Ascending aorta (tissue), 2 donors: ENCODE measurements at regions of chr12 and their contacts with region 1.

Region 1: DNA sequence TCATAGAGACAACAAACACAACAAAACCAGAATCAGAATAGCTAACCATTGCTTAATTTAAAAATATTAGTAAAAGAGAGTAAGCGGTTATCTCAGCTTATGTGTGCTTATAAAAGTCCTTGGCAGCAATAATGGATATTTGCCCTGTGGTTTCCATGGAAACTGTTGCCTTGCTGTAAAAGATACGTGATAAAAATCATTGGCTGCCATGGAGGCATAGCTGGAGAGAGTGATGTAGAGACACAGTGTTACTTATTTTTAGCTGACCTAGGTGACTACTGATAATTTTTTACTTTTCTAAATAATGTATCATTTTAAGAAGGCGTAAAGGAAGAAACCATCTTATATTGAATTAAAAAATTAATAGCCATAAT is 92.9 kb downstream of the ERC1 start:
- DNase-seq: peak in 1 of 2 donors; percentile 64
- H3K4me3 ChIP-seq: peak overlapping the region; percentile 1 to 52
- H3K27ac ChIP-seq: peak overlapping the region; percentile 80 to 84
- H3K4me1 ChIP-seq: peaks cover 0 to 10% of the 10 kb centered on the region in 2 donors
- H3K27me3 ChIP-seq: no peaks in the 10 kb centered on the region
- CTCF ChIP-seq: no peak

Region 2: GRCh38 chr12:990661-991349 is 93.1 kb before region 1 on chr12 and contains the start of gene ERC1:
- intact Hi-C with region 1: loop called (anchors 5 kb)
- DNase-seq: peak; percentile 55 to 93
- H3K4me3 ChIP-seq: peak within 1 kb of the TSS; percentile 90 to 94
- H3K27ac ChIP-seq: peak within 1 kb of the TSS; percentile 98
- H3K4me1 ChIP-seq: peaks cover 0 to 18% of the 10 kb centered on the region in 2 donors
- H3K27me3 ChIP-seq: no peaks in the 10 kb centered on the region
- CTCF ChIP-seq: peak in 2 of 3 experiments; percentile 3 to 6
- total RNA-seq, gene ERC1: 41.4 TPM